Activated B cell treated with CpG ODN at 0.5 μM for 24 hours (primary cell): ENCODE measurements at regions of chr18 and their contacts with region 1.

Region 1: GRCh38 chr18:61901323-61901986 is 8.6 kb upstream of the RNF152 start:
- DNase-seq: no peak
- ATAC-seq: peak; percentile 81
- H3K4me3 Mint-ChIP-seq: no peak overlapping the region
- H3K27ac Mint-ChIP-seq: no peak overlapping the region
- H3K4me1 Mint-ChIP-seq: no peaks in the 10 kb centered on the region
- H3K27me3 Mint-ChIP-seq: peaks cover 37% of the 10 kb centered on the region
- CTCF ChIP-seq: peak; percentile 56

Region 2: DNA sequence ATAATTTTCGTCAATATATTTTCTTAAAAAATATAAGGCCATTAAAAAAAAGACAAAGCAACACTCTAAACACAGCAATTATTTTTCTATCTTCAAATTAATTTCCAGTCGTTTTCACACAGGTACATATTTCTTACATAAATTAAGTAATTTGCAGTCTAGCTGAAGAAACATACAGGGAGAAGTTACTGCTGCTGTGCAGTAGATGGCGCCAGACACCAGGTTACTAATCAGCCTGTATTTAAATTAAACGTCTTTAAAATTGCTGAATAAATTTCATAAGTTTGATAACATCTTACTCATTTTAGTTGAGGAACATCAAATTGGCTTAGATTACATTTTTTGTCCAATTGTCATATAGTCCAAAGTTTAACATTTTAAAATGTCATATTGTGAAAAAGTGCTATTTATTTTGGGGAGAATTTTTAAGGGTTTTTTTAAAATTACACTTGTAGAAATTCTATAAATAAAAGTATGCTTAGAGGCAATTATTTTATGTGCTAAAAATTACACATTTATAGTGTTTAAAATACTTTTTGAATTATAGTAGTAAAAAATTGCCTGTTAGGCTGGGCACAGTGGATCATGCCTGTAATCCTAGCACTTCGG is 1913.3 kb before region 1 on chr18:
- CTCF ChIA-PET with region 1: interaction called, 4 read pairs
- POLR2A ChIA-PET with region 1: no interaction called
- intact Hi-C with region 1: loop called (anchors 1 kb)
- DNase-seq: no peak
- ATAC-seq: peak; percentile 64
- H3K4me3 Mint-ChIP-seq: no peak overlapping the region
- H3K27ac Mint-ChIP-seq: no peak overlapping the region
- H3K4me1 Mint-ChIP-seq: no peaks in the 10 kb centered on the region
- H3K27me3 Mint-ChIP-seq: peaks cover 17% of the 10 kb centered on the region
- CTCF ChIP-seq: peak; percentile 100

Region 3: GRCh38 chr18:61322265-61322873 is 579.1 kb before region 1 on chr18:
- CTCF ChIA-PET with region 1: no interaction called
- POLR2A ChIA-PET with region 1: no interaction called
- intact Hi-C with region 1: loop called (anchors 2 kb)
- DNase-seq: no peak
- ATAC-seq: peak; percentile 42
- H3K4me3 Mint-ChIP-seq: no peak overlapping the region
- H3K27ac Mint-ChIP-seq: no peak overlapping the region
- H3K4me1 Mint-ChIP-seq: no peaks in the 10 kb centered on the region
- H3K27me3 Mint-ChIP-seq: peaks cover 1% of the 10 kb centered on the region
- CTCF ChIP-seq: no peak

Region 4: GRCh38 chr18:61635901-61636528 is 265.4 kb before region 1 on chr18:
- CTCF ChIA-PET with region 1: no interaction called
- POLR2A ChIA-PET with region 1: no interaction called
- intact Hi-C with region 1: loop called (anchors 5 kb)
- DNase-seq: no peak
- ATAC-seq: no peak
- H3K4me3 Mint-ChIP-seq: no peak overlapping the region
- H3K27ac Mint-ChIP-seq: no peak overlapping the region
- H3K4me1 Mint-ChIP-seq: no peaks in the 10 kb centered on the region
- H3K27me3 Mint-ChIP-seq: peaks cover 2% of the 10 kb centered on the region
- CTCF ChIP-seq: no peak

Region 5: GRCh38 chr18:62339106-62339988 is 437.9 kb after region 1 on chr18:
- CTCF ChIA-PET with region 1: no interaction called
- POLR2A ChIA-PET with region 1: no interaction called
- intact Hi-C with region 1: no loop called
- DNase-seq: no peak
- ATAC-seq: no peak
- H3K4me3 Mint-ChIP-seq: no peak overlapping the region
- H3K27ac Mint-ChIP-seq: no peak overlapping the region
- H3K4me1 Mint-ChIP-seq: no peaks in the 10 kb centered on the region
- H3K27me3 Mint-ChIP-seq: peaks cover 19% of the 10 kb centered on the region
- CTCF ChIP-seq: no peak

Region 6: GRCh38 chr18:62714671-62715435 is 813.4 kb after region 1 on chr18:
- CTCF ChIA-PET with region 1: no interaction called
- POLR2A ChIA-PET with region 1: no interaction called
- intact Hi-C with region 1: no loop called
- DNase-seq: peak; percentile 88
- ATAC-seq: peak; percentile 79
- H3K4me3 Mint-ChIP-seq: peak overlapping the region; percentile 91
- H3K27ac Mint-ChIP-seq: peak overlapping the region; percentile 89
- H3K4me1 Mint-ChIP-seq: peaks cover 37% of the 10 kb centered on the region
- H3K27me3 Mint-ChIP-seq: no peaks in the 10 kb centered on the region
- CTCF ChIP-seq: no peak